ENCODE measurements at regions of chr10 and their contacts with region 1.

Region 1: DNA sequence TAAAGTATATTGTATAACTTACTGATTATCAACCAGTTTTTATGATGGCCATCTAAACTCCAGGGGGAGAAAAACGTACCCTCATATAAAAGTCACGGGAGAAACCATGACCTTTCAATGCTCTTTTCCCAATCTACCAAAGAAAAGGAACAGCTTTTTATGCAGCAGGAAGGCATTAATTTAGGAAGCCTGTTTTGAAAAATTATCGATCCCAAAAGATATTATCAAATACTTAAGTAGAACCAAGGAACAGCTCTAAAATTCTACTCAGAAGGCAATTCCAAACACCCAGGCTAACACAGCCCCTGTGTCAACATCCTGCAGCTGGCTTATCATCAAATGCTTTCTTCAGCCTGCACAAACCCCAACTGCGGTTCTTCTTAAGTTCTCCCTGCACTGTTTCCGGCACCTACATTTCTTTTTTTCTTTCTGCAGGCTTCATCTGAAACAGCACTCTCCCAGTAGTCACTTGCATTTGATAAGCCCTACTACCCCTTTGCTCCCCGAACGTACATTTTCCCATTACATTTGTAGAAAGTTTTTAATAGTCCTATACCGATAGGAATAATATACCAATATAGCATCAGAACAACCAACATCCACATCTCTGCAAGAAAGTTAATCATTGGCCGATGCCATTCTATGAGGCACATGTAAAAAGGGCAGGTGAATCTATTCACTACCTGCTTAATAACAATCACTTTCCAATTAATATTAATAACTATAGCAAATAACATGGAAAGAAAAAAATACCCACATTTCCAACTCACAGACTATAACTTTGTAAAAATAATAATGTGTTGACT is 47.9 kb downstream of the PIP4K2A start:
- DNase-seq: no peak
- ATAC-seq: peak; percentile 77
- H3K4me3 ChIP-seq: peak overlapping the region; percentile 39; the same call in 1 of the 2 replicates
- H3K27ac ChIP-seq: peak overlapping the region; percentile 50
- H3K4me1 ChIP-seq: peaks cover 27% of the 10 kb centered on the region
- H3K27me3 ChIP-seq: no peaks in the 10 kb centered on the region
- CTCF ChIP-seq: no peak
- EP300 ChIP-seq: no peak
- POLR2A ChIP-seq: no peak
- RAD21 ChIP-seq: no peak

Region 2: DNA sequence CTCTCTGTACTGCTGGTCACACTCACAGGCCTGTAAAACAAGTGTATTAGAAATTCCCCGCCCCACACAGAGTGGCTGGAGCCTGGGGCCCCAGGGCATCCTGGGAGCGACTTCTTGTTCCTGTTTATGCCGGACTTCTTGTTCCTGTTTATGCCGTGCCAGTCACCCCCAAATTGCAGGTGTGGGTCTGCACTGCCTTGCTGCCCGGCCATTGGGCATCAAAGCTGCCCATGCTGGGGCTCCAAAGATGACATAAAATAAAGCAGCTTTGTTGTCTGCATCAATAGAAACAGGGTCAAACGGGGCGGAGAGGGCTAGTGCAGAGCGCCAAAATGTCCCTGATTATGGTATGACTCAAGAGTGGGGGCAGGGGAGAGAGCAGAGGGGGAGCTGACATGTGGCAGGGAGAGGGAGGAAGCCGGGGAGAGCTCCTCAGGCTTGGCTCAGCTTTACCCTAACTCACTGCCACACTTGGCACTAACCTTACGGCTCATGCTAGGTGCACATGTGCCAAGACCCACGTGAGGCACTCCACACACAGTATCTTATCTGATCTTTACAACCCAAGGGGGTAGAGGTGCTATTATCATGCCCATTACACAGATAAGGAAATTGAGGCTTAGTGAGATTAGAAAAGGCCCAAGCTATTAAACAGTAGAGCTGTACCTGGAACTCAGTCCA is 50.5 kb before region 1 on chr10:
- CTCF ChIA-PET with region 1: interaction called, 4 read pairs
- POLR2A ChIA-PET with region 1: no interaction called
- RAD21 ChIA-PET with region 1: interaction called, 11 read pairs
- SMC1A ChIA-PET with region 1: interaction called, 13 read pairs
- in situ Hi-C with region 1: no loop called
- intact Hi-C with region 1: no loop called
- DNase-seq: peak; percentile 35
- ATAC-seq: peak; percentile 91
- H3K4me3 ChIP-seq: peak overlapping the region; percentile 54; the same call in 1 of the 2 replicates
- H3K27ac ChIP-seq: peak overlapping the region; percentile 73
- H3K4me1 ChIP-seq: peaks cover 57% of the 10 kb centered on the region
- H3K27me3 ChIP-seq: no peaks in the 10 kb centered on the region
- CTCF ChIP-seq: no peak
- EP300 ChIP-seq: no peak
- POLR2A ChIP-seq: peak; percentile 67
- RAD21 ChIP-seq: no peak

Region 3: DNA sequence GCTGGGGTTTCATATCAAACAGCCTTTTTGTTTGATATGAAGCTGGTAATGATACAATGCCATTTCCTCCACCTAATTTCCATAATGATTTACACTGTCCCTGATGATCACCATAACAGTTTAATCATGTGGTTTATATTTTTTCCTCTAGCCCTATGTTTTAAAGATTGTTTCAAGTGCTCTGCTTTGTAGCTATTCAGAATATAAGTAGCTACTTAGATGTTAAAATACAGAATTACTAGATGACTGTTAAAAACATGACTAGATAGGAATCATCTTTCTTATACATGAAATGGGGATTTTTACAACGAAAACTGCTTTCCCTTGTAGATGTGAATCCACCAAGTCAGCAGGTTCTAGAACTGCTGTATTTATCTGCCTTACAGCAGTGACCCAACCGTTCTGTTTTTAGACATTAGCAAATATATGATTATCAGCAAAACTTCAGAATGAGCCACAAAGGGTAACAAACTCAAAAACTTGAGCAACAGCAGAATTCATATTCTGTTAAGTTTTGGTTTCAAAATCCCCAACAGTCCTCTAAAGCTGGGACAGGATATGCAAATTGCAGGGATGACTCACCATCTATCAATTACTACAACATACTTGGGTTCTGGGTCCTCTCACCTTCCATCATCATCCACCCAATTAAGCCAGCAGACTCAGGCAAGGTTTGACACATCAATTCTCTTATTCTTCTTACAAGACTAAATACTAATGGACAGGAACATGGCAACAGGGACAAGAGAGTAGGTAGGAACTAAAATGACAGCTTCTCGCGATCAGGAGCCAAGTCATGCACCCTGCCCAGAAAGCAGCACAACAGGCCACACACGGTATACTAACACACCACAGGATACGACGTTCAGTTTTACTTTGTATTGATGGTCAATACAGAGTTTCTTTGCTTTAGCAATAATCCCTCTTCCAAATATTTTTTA is 36.0 kb before region 1 on chr10:
- CTCF ChIA-PET with region 1: no interaction called
- POLR2A ChIA-PET with region 1: interaction called, 5 read pairs
- RAD21 ChIA-PET with region 1: interaction called, 24 read pairs
- SMC1A ChIA-PET with region 1: interaction called, 28 read pairs
- in situ Hi-C with region 1: no loop called
- intact Hi-C with region 1: no loop called
- DNase-seq: peak; percentile 92
- ATAC-seq: peak; percentile 89
- H3K4me3 ChIP-seq: peak overlapping the region; percentile 57
- H3K27ac ChIP-seq: peak overlapping the region; percentile 89
- H3K4me1 ChIP-seq: peaks cover 42% of the 10 kb centered on the region
- H3K27me3 ChIP-seq: no peaks in the 10 kb centered on the region
- CTCF ChIP-seq: no peak
- EP300 ChIP-seq: peak; percentile 70; a peak in 3 of 4 replicates
- POLR2A ChIP-seq: no peak
- RAD21 ChIP-seq: 0 out of 2 replicates have a peak, but pooled peaks have one; percentile 13

Region 4: DNA sequence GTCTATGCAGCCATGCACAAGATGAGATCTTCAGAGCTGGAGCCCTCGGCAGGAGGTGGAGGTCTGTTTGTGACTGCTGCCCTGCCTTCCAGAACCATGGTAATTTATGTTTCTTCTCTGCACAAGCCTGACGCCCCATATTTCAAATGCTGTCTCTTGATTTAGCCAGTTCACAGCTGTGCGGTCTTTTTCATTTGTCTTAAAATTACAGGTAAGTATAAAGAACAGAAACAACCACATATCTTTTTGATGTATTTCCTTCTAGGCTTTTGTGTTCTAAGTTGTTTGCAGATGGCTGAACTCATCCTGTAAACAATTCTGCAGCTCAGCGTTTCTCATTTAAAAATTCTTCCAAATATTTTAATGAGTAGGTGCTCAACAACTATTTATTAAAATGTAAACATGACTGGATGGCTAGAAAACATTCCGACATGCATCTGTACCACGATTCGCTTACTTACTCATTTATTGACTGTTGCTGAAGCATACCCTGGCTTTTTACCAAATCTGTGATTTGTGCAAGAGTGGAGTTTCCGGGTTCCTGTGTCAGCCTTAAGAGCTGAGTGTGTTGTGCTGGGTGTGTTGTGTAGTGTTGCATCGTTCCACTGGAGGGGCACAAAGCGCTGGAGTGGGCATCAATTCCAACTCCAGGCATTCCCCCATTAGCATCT is 11.0 kb before region 1 on chr10:
- CTCF ChIA-PET with region 1: interaction called, 4 read pairs
- POLR2A ChIA-PET with region 1: interaction called, 8 read pairs
- RAD21 ChIA-PET with region 1: interaction called, 71 read pairs
- SMC1A ChIA-PET with region 1: interaction called, 91 read pairs
- in situ Hi-C with region 1: no loop called
- intact Hi-C with region 1: no loop called
- DNase-seq: no peak
- ATAC-seq: peak; percentile 38
- H3K4me3 ChIP-seq: no peak overlapping the region
- H3K27ac ChIP-seq: peak overlapping the region; percentile 17; the same call in 1 of the 2 replicates
- H3K4me1 ChIP-seq: peaks cover 66% of the 10 kb centered on the region
- H3K27me3 ChIP-seq: no peaks in the 10 kb centered on the region
- CTCF ChIP-seq: no peak
- EP300 ChIP-seq: no peak
- POLR2A ChIP-seq: no peak
- RAD21 ChIP-seq: peak; percentile 19; the same call in 1 of the 2 replicates

Region 5: GRCh38 chr10:22682237-22683139 is 16.0 kb after region 1 on chr10:
- CTCF ChIA-PET with region 1: interaction called, 8 read pairs
- POLR2A ChIA-PET with region 1: interaction called, 8 read pairs
- RAD21 ChIA-PET with region 1: interaction called, 10 read pairs
- SMC1A ChIA-PET with region 1: interaction called, 107 read pairs
- in situ Hi-C with region 1: no loop called
- intact Hi-C with region 1: loop called (anchors 2 kb)
- DNase-seq: peak; percentile 52
- ATAC-seq: peak; percentile 64
- H3K4me3 ChIP-seq: peak overlapping the region; percentile 45; the same call in 1 of the 2 replicates
- H3K27ac ChIP-seq: peak overlapping the region; percentile 82
- H3K4me1 ChIP-seq: peaks cover 43% of the 10 kb centered on the region
- H3K27me3 ChIP-seq: no peaks in the 10 kb centered on the region
- CTCF ChIP-seq: no peak
- EP300 ChIP-seq: no peak
- POLR2A ChIP-seq: no peak
- RAD21 ChIP-seq: no peak

Region 6: DNA sequence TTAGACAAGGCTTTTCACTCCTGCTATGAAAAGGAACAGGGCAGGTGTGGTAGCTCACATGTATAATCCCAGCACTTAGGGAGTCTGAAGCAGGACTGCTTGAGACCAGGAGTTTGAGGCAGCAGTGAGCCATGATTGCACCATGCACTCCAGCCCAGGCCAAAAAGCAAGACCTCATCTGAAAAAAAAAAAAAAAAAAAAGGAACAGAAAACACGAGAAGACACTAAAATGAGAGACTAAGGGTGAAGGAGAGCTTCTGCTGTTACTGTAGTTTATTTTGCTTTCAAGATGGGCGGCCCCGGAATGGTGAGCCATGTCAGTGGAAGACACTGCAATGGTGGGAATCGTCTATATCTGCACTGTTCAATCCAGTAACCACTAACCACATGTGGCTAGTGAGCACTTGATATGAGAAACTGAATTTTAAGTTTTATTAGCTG is 38.0 kb after region 1 on chr10:
- CTCF ChIA-PET with region 1: interaction called, 8 read pairs
- POLR2A ChIA-PET with region 1: interaction called, 6 read pairs
- RAD21 ChIA-PET with region 1: interaction called, 14 read pairs
- SMC1A ChIA-PET with region 1: interaction called, 19 read pairs
- in situ Hi-C with region 1: no loop called
- intact Hi-C with region 1: no loop called
- DNase-seq: no peak
- ATAC-seq: peak; percentile 53
- H3K4me3 ChIP-seq: peak overlapping the region; percentile 66; the same call in 1 of the 2 replicates
- H3K27ac ChIP-seq: peak overlapping the region; percentile 76
- H3K4me1 ChIP-seq: peaks cover 65% of the 10 kb centered on the region
- H3K27me3 ChIP-seq: no peaks in the 10 kb centered on the region
- CTCF ChIP-seq: no peak
- EP300 ChIP-seq: no peak
- POLR2A ChIP-seq: no peak
- RAD21 ChIP-seq: 0 out of 2 replicates have a peak, but pooled peaks have one; percentile 9